CD8-positive, alpha-beta T cell (primary cell): ENCODE measurements at regions of chr22 and their contacts with region 1.

Region 1: DNA sequence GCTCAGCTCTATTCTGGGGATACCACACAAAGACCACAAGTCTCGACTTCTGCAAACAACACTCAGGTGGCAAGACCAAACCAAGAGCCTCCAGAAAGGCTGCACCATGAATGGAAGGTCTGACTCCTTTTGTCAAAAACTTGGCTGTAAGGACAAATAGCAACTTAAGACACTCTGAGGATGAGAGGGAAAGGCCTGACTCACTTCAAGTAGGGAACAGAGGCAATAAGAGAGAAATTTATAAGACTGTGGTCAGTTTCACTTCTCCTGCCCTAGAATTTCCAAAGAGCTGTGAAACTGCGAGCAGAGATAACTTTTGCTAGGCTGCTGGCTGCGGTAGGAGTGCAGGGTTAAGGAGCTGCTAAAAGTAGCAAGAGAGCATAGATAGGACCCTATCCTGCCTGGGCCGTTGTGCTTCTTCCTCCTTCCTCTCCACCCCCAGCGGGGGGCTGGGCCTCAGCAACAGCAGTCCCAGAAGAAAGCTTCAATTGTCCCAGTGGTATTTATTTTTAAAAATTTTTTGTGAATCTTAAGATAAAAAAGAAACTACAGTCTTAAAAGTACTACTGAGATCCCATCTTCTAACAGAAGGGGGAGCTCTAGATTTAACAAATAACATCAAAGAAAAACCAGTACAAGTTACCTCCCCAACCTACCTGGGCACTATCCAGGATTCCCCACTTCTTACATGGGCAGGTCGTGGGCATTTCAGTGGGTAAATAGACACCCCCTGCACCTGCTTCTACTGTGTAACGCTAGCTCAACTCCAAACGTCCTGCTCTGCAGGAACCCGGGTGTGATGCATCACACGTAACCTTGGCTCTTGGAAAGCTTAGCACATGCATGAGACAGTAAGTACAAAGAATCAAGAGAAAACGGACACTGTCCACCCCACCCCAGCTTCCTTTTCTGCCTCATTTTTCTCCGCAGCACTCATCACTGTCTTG is 66.4 kb downstream of the SGSM3 start:
- DNase-seq: peak in 4 of 9 experiments; percentile 24 to 79 (median 66)
- ATAC-seq: peak; percentile 78
- H3K4me3 ChIP-seq: no peak overlapping the region
- H3K4me3 Mint-ChIP-seq: peak overlapping the region; percentile 37
- H3K27ac ChIP-seq: peak overlapping the region in 1 of 2 experiments; percentile 60
- H3K27ac Mint-ChIP-seq: peak overlapping the region; percentile 73
- H3K4me1 ChIP-seq: peaks cover 44% of the 10 kb centered on the region
- H3K4me1 Mint-ChIP-seq: peaks cover 61% of the 10 kb centered on the region
- H3K27me3 ChIP-seq: no peaks in the 10 kb centered on the region
- H3K27me3 Mint-ChIP-seq: no peaks in the 10 kb centered on the region
- CTCF ChIP-seq: peak; percentile 80

Region 2: GRCh38 chr22:40418366-40419201 is 18.2 kb before region 1 on chr22:
- CTCF ChIA-PET with region 1: interaction called, 47 read pairs
- POLR2A ChIA-PET with region 1: interaction called, 3 read pairs
- intact Hi-C with region 1: no loop called
- DNase-seq: peak in 5 of 9 experiments; percentile 23 to 90 (median 70)
- ATAC-seq: peak; percentile 94
- H3K4me3 ChIP-seq: no peak overlapping the region
- H3K4me3 Mint-ChIP-seq: no peak overlapping the region
- H3K27ac ChIP-seq: no peak overlapping the region
- H3K27ac Mint-ChIP-seq: peak overlapping the region; percentile 60
- H3K4me1 ChIP-seq: peaks cover 43% of the 10 kb centered on the region
- H3K4me1 Mint-ChIP-seq: peaks cover 55% of the 10 kb centered on the region
- H3K27me3 ChIP-seq: no peaks in the 10 kb centered on the region
- H3K27me3 Mint-ChIP-seq: no peaks in the 10 kb centered on the region
- CTCF ChIP-seq: no peak

Region 3: DNA sequence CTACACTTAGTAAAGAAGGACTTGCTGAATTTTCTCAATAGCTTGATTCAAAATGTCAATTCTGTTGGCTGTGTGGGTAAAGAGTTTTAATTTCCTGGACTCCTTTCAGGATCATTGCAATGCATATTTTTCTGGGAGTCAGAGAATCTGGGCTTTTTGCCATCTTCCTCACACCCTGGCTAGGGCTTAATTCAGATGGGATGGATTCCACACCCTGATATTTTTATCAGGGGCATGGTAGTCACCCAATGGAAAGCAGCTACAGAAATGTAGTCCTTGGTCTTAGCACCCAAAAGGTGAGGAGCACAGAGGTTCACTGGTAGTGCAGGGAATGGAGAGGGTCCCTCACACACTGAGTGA is 12.9 kb after region 1 on chr22:
- CTCF ChIA-PET with region 1: interaction called, 47 read pairs
- POLR2A ChIA-PET with region 1: interaction called, 3 read pairs
- intact Hi-C with region 1: no loop called
- DNase-seq: no peak
- ATAC-seq: no peak
- H3K4me3 ChIP-seq: no peak overlapping the region
- H3K4me3 Mint-ChIP-seq: peak overlapping the region; percentile 35
- H3K27ac ChIP-seq: no peak overlapping the region
- H3K27ac Mint-ChIP-seq: peak overlapping the region; percentile 61
- H3K4me1 ChIP-seq: peaks cover 86% of the 10 kb centered on the region
- H3K4me1 Mint-ChIP-seq: peaks cover 81% of the 10 kb centered on the region
- H3K27me3 ChIP-seq: no peaks in the 10 kb centered on the region
- H3K27me3 Mint-ChIP-seq: no peaks in the 10 kb centered on the region
- CTCF ChIP-seq: no peak

Region 4: GRCh38 chr22:40479126-40479800 is 42.5 kb after region 1 on chr22:
- CTCF ChIA-PET with region 1: interaction called, 50 read pairs
- POLR2A ChIA-PET with region 1: interaction called, 5 read pairs
- intact Hi-C with region 1: loop called (anchors 1 to 2 kb)
- DNase-seq: no peak
- ATAC-seq: no peak
- H3K4me3 ChIP-seq: no peak overlapping the region
- H3K4me3 Mint-ChIP-seq: no peak overlapping the region
- H3K27ac ChIP-seq: no peak overlapping the region
- H3K27ac Mint-ChIP-seq: no peak overlapping the region
- H3K4me1 ChIP-seq: no peaks in the 10 kb centered on the region
- H3K4me1 Mint-ChIP-seq: peaks cover 43% of the 10 kb centered on the region
- H3K27me3 ChIP-seq: no peaks in the 10 kb centered on the region
- H3K27me3 Mint-ChIP-seq: no peaks in the 10 kb centered on the region
- CTCF ChIP-seq: no peak

Region 5: GRCh38 chr22:40512426-40513136 is 75.8 kb after region 1 on chr22:
- CTCF ChIA-PET with region 1: interaction called, 12 read pairs
- POLR2A ChIA-PET with region 1: no interaction called
- intact Hi-C with region 1: no loop called
- DNase-seq: no peak
- ATAC-seq: no peak
- H3K4me3 ChIP-seq: no peak overlapping the region
- H3K4me3 Mint-ChIP-seq: no peak overlapping the region
- H3K27ac ChIP-seq: no peak overlapping the region
- H3K27ac Mint-ChIP-seq: no peak overlapping the region
- H3K4me1 ChIP-seq: no peaks in the 10 kb centered on the region
- H3K4me1 Mint-ChIP-seq: peaks cover 19% of the 10 kb centered on the region
- H3K27me3 ChIP-seq: no peaks in the 10 kb centered on the region
- H3K27me3 Mint-ChIP-seq: no peaks in the 10 kb centered on the region
- CTCF ChIP-seq: no peak

Region 6: DNA sequence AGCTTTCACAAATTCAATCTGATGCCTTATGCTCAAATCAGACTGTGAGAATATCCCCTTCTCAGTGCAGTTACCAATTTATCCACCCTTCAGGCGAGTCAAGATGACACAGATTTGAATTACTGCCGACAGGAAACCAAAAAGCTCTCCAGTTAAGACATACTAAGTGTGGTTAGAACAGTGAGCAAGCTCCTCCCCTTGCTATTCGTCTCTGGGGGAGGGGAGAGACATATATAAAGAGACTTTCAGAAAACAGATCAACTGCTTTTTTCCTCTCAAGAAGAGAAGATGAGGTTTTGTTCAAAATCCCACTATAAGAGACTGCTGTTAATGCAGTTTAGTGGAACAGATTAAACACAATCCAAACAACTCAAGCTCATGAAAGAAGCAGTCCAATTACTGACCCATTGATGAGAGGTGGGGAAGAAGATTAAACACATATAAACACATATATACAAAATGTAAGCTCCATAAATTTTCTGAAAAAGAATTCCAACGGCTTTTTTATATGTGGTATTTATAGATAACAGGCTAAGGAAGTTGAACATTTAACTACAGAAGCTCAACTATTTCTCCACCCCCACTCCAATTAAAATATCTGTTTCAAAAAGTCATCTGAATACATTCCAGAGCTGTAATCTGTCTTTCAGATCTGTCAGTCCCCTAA is 97.1 kb after region 1 on chr22:
- CTCF ChIA-PET with region 1: interaction called, 16 read pairs
- POLR2A ChIA-PET with region 1: interaction called, 3 read pairs
- intact Hi-C with region 1: no loop called
- DNase-seq: peak; percentile 6 to 86 (median 58)
- ATAC-seq: peak; percentile 98
- H3K4me3 ChIP-seq: peak overlapping the region; percentile 46 to 48
- H3K4me3 Mint-ChIP-seq: peak overlapping the region; percentile 82
- H3K27ac ChIP-seq: peak overlapping the region; percentile 19 to 63
- H3K27ac Mint-ChIP-seq: peak overlapping the region; percentile 87
- H3K4me1 ChIP-seq: peaks cover 41% of the 10 kb centered on the region
- H3K4me1 Mint-ChIP-seq: peaks cover 63% of the 10 kb centered on the region
- H3K27me3 ChIP-seq: no peaks in the 10 kb centered on the region
- H3K27me3 Mint-ChIP-seq: no peaks in the 10 kb centered on the region
- CTCF ChIP-seq: no peak

Region 7: DNA sequence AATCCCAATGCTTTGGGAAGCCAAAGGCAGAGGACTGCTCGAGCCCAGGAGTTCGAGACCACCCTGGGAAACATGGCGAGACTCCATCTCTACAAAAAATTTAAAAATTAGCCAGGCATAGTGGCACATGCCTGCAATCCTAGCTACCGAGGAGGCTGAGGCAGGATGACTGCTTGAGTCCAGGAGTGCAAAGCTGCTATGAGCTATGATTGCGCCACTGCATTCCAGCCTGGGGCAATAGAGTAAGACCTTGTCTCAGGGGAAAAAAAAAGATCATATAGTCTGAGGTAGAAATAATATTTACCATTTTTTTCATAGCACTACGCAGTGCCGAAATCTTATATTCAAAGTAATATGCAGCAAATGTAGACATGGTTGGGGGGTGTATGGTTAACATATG is 151.9 kb after region 1 on chr22:
- CTCF ChIA-PET with region 1: no interaction called
- POLR2A ChIA-PET with region 1: no interaction called
- intact Hi-C with region 1: no loop called
- DNase-seq: no peak
- ATAC-seq: no peak
- H3K4me3 ChIP-seq: no peak overlapping the region
- H3K4me3 Mint-ChIP-seq: no peak overlapping the region
- H3K27ac ChIP-seq: no peak overlapping the region
- H3K27ac Mint-ChIP-seq: no peak overlapping the region
- H3K4me1 ChIP-seq: peaks cover under 1% of the 10 kb centered on the region
- H3K4me1 Mint-ChIP-seq: peaks cover 24% of the 10 kb centered on the region
- H3K27me3 ChIP-seq: no peaks in the 10 kb centered on the region
- H3K27me3 Mint-ChIP-seq: no peaks in the 10 kb centered on the region
- CTCF ChIP-seq: no peak

Region 8: DNA sequence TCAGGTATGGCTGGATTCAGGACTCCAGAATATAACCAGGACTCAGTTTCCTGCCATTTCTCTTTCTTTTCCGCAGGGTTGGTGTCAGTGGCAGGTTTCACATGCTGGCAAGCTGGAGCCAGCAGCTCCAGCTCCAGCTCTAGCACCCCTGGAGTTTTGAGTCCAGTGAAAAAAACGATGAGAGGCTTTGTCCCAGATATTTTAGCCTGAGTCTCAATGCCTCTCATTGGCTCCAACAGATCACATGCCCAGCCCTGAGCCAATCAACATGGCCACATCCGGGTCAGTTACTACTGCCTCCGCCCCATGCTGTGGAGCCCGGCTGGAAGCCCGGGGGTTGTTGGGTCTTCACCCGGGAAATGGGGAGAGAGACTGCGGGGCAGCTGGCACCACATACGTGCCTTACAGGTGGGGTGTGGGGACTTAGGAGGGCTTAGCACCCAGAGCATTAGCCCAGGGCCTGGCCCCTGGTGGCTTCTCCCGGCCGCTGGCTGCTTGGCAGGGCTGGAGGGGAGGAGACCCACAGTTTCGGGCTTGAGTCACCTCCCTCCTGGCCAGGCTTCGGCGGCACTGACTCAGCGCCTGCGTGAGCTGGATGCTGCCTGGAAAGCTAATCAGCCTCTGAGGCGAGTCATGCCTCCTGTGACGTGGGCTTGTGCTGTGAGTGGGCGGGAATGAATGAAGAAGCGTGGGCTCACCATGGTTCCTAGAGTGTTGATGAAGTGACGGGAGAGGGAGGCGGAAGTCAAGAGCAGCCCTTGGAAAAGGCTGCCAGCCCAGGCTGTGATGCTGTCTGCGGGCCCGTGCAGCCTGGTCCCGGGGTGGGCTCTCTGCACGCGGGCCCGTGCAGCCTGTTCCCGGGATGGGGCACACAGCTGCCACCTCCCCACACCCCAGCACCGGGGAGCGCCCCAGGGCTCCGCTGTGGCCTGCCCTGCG is 215.1 kb after region 1 on chr22:
- CTCF ChIA-PET with region 1: interaction called, 81 read pairs
- POLR2A ChIA-PET with region 1: no interaction called
- intact Hi-C with region 1: no loop called
- DNase-seq: peak; percentile 33 to 79 (median 61)
- ATAC-seq: peak; percentile 91
- H3K4me3 ChIP-seq: peak overlapping the region; percentile 39 to 47
- H3K4me3 Mint-ChIP-seq: peak overlapping the region; percentile 75
- H3K27ac ChIP-seq: peak overlapping the region; percentile 48 to 65
- H3K27ac Mint-ChIP-seq: peak overlapping the region; percentile 80
- H3K4me1 ChIP-seq: no peaks in the 10 kb centered on the region
- H3K4me1 Mint-ChIP-seq: peaks cover 4% of the 10 kb centered on the region
- H3K27me3 ChIP-seq: no peaks in the 10 kb centered on the region
- H3K27me3 Mint-ChIP-seq: no peaks in the 10 kb centered on the region
- CTCF ChIP-seq: no peak